Caco-2 (cell line): ENCODE measurements at regions of chr1 and their contacts with region 1.

Region 1: DNA sequence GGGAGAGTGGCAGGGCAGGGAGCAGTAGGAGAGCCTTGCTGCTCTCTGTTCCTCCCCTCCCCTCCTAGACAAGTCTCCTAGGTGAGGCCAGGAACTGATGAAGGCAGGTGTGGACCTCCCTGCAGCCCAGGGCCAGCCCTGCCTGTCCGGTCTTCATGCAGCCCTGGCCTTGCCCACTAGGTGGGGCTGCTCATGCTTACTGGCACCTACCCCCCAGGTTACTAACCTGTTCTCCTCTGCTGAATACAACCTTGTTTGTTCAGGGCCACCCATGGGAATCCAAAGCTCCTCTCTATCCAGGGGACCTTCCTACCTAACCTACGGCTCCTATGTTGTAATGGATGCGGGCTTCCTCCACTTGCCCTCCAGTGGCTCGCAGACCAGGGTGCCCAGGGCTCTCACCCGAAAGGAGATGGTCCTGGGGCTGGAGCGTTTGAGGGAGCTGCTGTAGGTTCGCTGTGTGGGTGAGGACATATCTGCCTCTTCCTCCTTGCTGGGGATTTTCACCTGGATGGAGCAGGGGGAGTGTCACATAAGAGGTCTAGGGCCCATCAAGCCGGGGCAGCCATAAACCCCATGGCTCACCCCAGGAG is 7.9 kb upstream of the TNNT2 start:
- DNase-seq: peak; percentile 80 to 89
- H3K4me3 ChIP-seq: no peak overlapping the region
- H3K4me3 Mint-ChIP-seq: no peak overlapping the region
- H3K27ac Mint-ChIP-seq: no peak overlapping the region
- H3K4me1 ChIP-seq: no peaks in the 10 kb centered on the region
- H3K4me1 Mint-ChIP-seq: peaks cover 7% of the 10 kb centered on the region
- H3K27me3 ChIP-seq: no peaks in the 10 kb centered on the region
- H3K27me3 Mint-ChIP-seq: no peaks in the 10 kb centered on the region
- CTCF ChIP-seq: peak; percentile 80 to 97

Region 2: DNA sequence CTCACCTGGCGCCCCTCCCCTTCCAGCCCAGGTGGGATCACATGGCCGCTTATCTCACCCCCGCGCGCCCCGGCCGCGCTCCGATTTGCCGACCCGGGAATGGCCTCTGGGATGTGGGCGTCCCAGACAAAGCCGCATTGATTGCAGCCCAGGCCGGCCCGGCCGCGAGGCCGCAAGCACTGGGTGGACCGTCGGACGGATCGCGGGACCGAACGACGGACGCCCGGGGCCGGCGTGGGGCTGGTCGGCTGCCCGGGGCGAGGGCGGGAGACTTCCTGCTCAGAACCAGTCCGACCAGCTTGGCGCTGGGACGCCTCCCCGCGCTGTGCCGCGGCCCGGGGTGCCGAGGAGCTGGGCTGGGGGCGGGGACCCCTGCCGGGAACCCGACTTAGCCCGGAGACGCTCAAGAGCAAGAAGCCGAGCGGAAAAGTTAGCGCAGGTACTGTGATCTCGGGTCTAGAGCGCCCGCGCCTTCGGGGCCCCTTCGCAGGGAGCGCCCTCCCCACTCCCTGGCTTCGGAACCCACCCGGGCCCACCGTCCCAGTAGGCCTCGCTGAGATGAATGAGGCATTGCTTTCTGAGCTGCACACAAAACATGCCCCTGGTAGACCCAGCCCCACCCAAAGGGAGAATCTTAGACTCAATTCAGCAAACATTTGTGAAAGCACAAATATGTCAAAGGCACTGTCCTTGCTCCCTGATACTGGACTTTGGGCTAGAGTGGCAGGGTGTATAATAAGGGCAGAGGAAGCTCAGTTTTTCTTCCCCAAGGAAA is 14.1 kb after region 1 on chr1:
- CTCF ChIA-PET with region 1: interaction called, 6 read pairs
- POLR2A ChIA-PET with region 1: interaction called, 5 read pairs
- intact Hi-C with region 1: loop called (anchors 1 kb)
- DNase-seq: peak; percentile 89 to 90
- H3K4me3 ChIP-seq: peak overlapping the region; percentile 79
- H3K4me3 Mint-ChIP-seq: peak overlapping the region; percentile 73
- H3K27ac Mint-ChIP-seq: peak overlapping the region; percentile 73
- H3K4me1 ChIP-seq: peaks cover 60% of the 10 kb centered on the region
- H3K4me1 Mint-ChIP-seq: peaks cover 32% of the 10 kb centered on the region
- H3K27me3 ChIP-seq: no peaks in the 10 kb centered on the region
- H3K27me3 Mint-ChIP-seq: no peaks in the 10 kb centered on the region
- CTCF ChIP-seq: no peak

Region 3: DNA sequence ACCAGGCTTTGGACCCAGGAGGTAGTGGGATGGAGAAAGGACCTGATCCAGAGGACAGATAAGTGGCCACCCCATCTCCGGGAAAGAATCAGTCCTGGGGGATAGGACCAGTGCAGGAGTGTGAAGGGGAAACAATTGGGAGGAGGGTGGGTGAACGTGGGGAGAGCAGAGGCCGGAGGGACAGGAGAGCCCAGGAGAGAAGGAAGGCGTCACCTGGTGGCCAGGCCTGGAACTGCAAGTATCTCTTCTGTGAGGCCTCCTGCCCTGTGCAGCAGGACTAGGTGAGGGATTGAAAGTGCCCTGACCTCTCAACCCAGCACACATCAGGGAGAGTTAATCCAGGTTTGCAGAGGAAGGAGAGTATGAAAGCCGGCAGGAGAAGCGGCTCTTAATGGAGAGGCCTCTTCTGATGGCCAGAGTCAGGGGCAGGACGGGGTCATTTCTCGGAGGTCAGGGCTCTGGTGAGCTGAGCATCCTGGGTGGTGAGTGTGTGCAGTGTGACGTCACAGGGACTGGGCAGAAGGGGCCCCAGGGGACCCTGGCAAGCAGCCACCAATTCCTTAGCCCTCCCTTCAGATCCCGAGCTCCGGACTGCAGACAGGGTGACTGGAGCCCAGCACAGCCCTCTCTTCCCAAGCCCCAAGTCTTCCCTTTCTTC is 22.9 kb after region 1 on chr1:
- CTCF ChIA-PET with region 1: interaction called, 12 read pairs
- POLR2A ChIA-PET with region 1: no interaction called
- intact Hi-C with region 1: loop called (anchors 1 kb)
- DNase-seq: peak; percentile 89 to 90
- H3K4me3 ChIP-seq: no peak overlapping the region
- H3K4me3 Mint-ChIP-seq: no peak overlapping the region
- H3K27ac Mint-ChIP-seq: peak overlapping the region; percentile 23
- H3K4me1 ChIP-seq: peaks cover 42% of the 10 kb centered on the region
- H3K4me1 Mint-ChIP-seq: peaks cover 11% of the 10 kb centered on the region
- H3K27me3 ChIP-seq: no peaks in the 10 kb centered on the region
- H3K27me3 Mint-ChIP-seq: no peaks in the 10 kb centered on the region
- CTCF ChIP-seq: peak; percentile 90 to 96

Region 4: DNA sequence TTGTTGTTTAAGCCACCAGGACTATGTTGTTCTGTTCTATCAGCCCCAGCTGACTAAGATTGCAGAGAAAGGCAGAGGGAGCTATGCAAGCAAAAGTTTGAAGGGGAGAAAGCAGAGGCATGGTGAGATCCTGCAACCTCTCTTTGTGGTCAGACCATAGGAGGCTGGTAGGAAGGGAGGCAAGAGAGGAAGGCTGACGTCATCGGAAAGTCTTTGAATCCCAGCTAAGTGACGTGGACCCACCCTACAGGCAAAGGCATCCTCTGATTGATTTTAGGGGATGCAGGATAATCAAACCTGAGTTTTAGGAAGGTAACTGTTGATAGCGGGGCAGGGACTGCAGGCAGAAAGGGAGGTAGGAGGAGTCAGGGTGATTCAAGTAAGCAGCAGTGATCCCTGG is 59.4 kb after region 1 on chr1:
- CTCF ChIA-PET with region 1: no interaction called
- POLR2A ChIA-PET with region 1: no interaction called
- intact Hi-C with region 1: no loop called
- DNase-seq: no peak
- H3K4me3 ChIP-seq: no peak overlapping the region
- H3K4me3 Mint-ChIP-seq: no peak overlapping the region
- H3K27ac Mint-ChIP-seq: no peak overlapping the region
- H3K4me1 ChIP-seq: no peaks in the 10 kb centered on the region
- H3K4me1 Mint-ChIP-seq: peaks cover 6% of the 10 kb centered on the region
- H3K27me3 ChIP-seq: no peaks in the 10 kb centered on the region
- H3K27me3 Mint-ChIP-seq: peaks cover 5% of the 10 kb centered on the region
- CTCF ChIP-seq: no peak